MCF 10A (cell line): ENCODE measurements at regions of chr17 and their contacts with region 1.

Region 1: DNA sequence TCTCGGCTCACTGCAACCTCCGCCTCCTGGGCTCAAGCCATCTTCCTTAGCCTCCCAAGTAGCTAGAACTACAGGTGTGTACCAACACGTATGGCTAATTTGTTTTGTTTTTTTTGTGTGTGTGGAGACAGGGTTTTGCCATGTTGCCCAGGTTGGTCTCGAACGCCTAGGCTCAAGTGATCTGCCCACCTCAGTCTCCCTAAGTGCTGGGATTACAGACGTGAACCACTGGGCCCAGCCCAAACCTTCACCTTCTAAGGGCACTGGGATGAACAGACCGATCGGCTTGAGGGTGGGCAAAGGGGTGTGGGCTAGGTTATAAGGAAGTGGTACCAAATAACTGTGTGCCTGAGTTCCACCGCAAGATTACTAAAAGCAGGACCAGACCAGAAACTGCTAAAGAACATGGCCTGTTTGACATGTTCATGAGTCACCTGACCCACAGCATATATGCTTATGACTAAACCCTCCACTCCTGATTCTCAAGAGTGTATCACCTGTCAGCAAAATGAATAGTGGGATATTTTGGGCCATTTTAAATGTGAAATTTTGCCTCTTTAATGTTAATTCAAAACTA is 8.1 kb downstream of the TMEM97 start:
- DNase-seq: no peak
- H3K4me3 Mint-ChIP-seq: no peak overlapping the region
- H3K27ac Mint-ChIP-seq: no peak overlapping the region
- H3K4me1 Mint-ChIP-seq: peaks cover 9% of the 10 kb centered on the region
- H3K27me3 Mint-ChIP-seq: no peaks in the 10 kb centered on the region
- CTCF ChIP-seq: no peak

Region 2: GRCh38 chr17:28008542-28008941 is 318.6 kb before region 1 on chr17:
- CTCF ChIA-PET with region 1: no interaction called
- POLR2A ChIA-PET with region 1: no interaction called
- intact Hi-C with region 1: loop called (anchors 5 kb)
- DNase-seq: peak; percentile 79
- H3K4me3 Mint-ChIP-seq: no peak overlapping the region
- H3K27ac Mint-ChIP-seq: no peak overlapping the region
- H3K4me1 Mint-ChIP-seq: no peaks in the 10 kb centered on the region
- H3K27me3 Mint-ChIP-seq: peaks cover 27% of the 10 kb centered on the region
- CTCF ChIP-seq: no peak

Region 3: DNA sequence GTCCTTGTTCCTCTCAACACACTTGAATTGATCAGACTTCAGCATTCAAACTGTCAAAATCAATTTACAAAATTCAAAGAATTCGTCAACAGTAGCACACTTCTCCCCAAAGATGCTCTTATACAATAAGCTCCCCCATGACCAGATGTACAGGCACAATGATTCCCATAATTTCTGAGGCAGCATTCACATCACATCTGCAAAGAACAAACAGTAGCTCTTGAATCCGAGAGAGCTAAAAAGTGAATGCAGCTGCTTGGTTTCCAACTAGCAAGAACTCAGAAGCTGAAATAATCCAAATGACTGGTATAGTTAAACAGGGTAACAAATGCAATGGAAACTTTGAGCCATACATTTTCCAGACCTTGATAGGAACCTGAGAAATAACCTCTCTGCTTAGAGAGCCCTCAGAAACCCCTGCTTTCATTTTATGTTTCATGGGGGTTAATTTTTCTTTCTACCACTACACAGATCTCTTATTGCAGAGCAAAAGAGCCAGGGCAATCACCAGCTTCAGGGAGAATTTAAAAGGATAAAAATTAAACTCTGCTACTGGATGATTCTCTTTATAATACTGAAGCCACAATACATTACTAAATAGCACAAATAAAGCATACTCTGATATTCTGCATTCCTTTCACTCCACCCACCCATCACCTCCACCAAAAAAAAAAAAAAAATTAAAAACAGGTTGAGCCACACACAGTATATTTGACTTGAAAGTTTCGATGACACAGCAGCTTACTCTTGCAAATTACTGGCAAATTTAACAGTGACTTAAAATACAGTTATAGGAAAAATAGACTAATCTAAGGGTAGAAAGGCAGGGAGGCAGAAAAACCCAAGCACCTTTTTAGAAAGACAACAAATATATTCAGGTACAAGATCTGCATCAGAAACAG is 31.2 kb before region 1 on chr17:
- CTCF ChIA-PET with region 1: no interaction called
- POLR2A ChIA-PET with region 1: no interaction called
- intact Hi-C with region 1: no loop called
- DNase-seq: no peak
- H3K4me3 Mint-ChIP-seq: no peak overlapping the region
- H3K27ac Mint-ChIP-seq: no peak overlapping the region
- H3K4me1 Mint-ChIP-seq: no peaks in the 10 kb centered on the region
- H3K27me3 Mint-ChIP-seq: no peaks in the 10 kb centered on the region
- CTCF ChIP-seq: no peak